ENCODE measurements at regions of chr11 and their contacts with region 1.

Region 1: DNA sequence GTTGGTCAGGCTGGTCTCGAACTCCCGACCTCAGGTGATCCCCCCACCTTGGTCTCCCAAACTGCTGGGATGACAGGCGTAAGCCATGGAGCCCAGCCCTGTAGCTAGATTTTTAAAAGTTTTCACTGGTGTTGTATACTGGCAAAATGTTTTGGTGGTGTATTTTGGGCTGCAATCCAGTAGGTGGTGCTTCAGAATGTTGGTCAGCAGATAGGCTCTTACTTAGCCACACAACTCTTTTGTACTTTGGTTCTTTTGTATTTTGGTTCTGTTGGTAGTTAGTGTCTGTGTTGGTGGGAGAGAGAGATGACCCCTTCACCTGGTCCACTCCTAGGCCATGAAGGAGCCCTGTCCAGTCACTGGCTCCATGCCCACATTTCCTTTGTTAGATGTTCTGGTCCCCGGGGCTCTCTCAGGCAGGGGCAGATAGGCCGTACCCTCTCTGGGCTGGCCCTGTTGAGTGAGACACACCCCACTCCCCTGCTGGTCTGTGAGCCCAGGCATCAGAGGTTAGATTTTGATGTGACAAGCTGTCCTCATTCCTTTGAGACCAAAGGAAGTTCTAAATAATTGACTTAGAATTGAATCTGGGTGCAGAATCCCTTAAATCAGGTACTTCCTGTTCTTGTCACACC is 123.8 kb downstream of the DDX10 start:
- DNase-seq: no peak
- H3K4me3 Mint-ChIP-seq: no peak overlapping the region
- H3K27ac Mint-ChIP-seq: no peak overlapping the region
- H3K4me1 Mint-ChIP-seq: peaks cover 28% of the 10 kb centered on the region
- H3K27me3 Mint-ChIP-seq: no peaks in the 10 kb centered on the region

Region 2: GRCh38 chr11:108620958-108621772 is 167.5 kb before region 1 on chr11:
- intact Hi-C with region 1: no loop called
- DNase-seq: no peak
- H3K4me3 Mint-ChIP-seq: no peak overlapping the region
- H3K27ac Mint-ChIP-seq: no peak overlapping the region
- H3K4me1 Mint-ChIP-seq: peaks cover 18% of the 10 kb centered on the region
- H3K27me3 Mint-ChIP-seq: peaks cover 7% of the 10 kb centered on the region

Region 3: GRCh38 chr11:109697140-109697843 is 908.6 kb after region 1 on chr11:
- intact Hi-C with region 1: loop called (anchors 5 kb)
- DNase-seq: no peak
- H3K4me3 Mint-ChIP-seq: no peak overlapping the region
- H3K27ac Mint-ChIP-seq: no peak overlapping the region
- H3K4me1 Mint-ChIP-seq: no peaks in the 10 kb centered on the region
- H3K27me3 Mint-ChIP-seq: no peaks in the 10 kb centered on the region